ENCODE measurements at regions of chr1 and their contacts with region 1.

Region 1: DNA sequence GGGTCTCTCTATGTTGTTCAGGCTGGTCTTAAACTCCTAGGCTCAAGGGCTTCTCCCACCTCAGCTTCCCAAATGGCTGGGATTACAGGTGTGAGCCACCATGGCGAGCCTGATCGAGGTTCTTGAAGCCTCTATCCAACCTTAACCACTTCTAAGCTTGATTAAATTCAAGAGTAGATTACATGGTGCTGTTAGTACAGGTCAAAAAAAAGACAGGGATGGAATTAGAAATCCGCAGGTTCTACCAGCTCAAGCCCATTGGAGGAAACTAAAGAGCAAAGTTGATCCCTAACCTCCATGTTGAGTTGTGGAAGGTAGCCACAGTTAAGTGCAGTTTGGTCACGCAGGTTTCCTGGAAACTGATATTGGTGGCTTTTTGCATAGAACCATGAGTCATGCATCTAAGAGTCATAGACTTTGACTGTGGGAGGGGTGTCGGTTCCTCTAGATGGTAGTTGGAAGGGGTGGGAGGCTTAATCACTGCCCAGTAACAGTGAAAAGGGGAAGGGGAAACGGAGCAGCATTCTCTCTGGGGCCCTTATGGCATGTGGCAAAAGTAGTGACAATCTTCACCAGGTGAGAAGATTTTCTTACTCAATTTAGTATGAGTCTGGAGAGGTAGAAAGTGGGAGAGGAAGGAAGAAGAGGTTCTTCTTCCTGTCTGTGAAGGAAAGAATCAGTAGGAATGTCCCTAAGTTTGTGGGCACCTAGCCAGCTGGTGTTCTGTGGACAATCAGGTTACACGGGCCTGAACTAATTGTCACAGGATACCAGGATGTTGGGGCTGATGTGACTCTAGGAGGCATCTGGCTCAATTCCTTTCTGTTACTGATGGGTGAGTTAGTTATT is 7.0 kb downstream of the CD53 start:
- DNase-seq: peak; percentile 65
- H3K4me3 Mint-ChIP-seq: peak overlapping the region; percentile 84
- H3K27ac Mint-ChIP-seq: peak overlapping the region; percentile 100
- H3K4me1 Mint-ChIP-seq: peaks cover 75% of the 10 kb centered on the region
- H3K27me3 Mint-ChIP-seq: no peaks in the 10 kb centered on the region

Region 2: GRCh38 chr1:110630839-110631663 is 248.9 kb before region 1 on chr1:
- intact Hi-C with region 1: loop called (anchors 2 kb)
- DNase-seq: peak; percentile 81
- H3K4me3 Mint-ChIP-seq: no peak overlapping the region
- H3K27ac Mint-ChIP-seq: no peak overlapping the region
- H3K4me1 Mint-ChIP-seq: peaks cover 58% of the 10 kb centered on the region
- H3K27me3 Mint-ChIP-seq: no peaks in the 10 kb centered on the region

Region 3: GRCh38 chr1:110798691-110799256 is 81.2 kb before region 1 on chr1:
- intact Hi-C with region 1: no loop called
- DNase-seq: no peak
- H3K4me3 Mint-ChIP-seq: no peak overlapping the region
- H3K27ac Mint-ChIP-seq: no peak overlapping the region
- H3K4me1 Mint-ChIP-seq: no peaks in the 10 kb centered on the region
- H3K27me3 Mint-ChIP-seq: peaks cover 44% of the 10 kb centered on the region

Region 4: GRCh38 chr1:110896090-110896489 is 16.1 kb after region 1 on chr1:
- intact Hi-C with region 1: loop called (anchors 1 kb)
- DNase-seq: no peak
- H3K4me3 Mint-ChIP-seq: no peak overlapping the region
- H3K27ac Mint-ChIP-seq: peak overlapping the region; percentile 59
- H3K4me1 Mint-ChIP-seq: peaks cover 76% of the 10 kb centered on the region
- H3K27me3 Mint-ChIP-seq: no peaks in the 10 kb centered on the region

Region 5: GRCh38 chr1:110963691-110964399 is 83.9 kb after region 1 on chr1 and contains the start of gene LRIF1:
- intact Hi-C with region 1: loop called (anchors 1 kb)
- DNase-seq: peak; percentile 100
- H3K4me3 Mint-ChIP-seq: peak within 1 kb of the TSS; percentile 89
- H3K27ac Mint-ChIP-seq: peak within 1 kb of the TSS; percentile 95
- H3K4me1 Mint-ChIP-seq: peaks cover 36% of the 10 kb centered on the region
- H3K27me3 Mint-ChIP-seq: peaks cover 13% of the 10 kb centered on the region
- total RNA-seq, gene LRIF1: 15.2 and 15.7 TPM in 2 replicates

Region 6: GRCh38 chr1:111133866-111134265 is 253.9 kb after region 1 on chr1:
- intact Hi-C with region 1: no loop called
- DNase-seq: no peak
- H3K4me3 Mint-ChIP-seq: no peak overlapping the region
- H3K27ac Mint-ChIP-seq: peak overlapping the region; percentile 14
- H3K4me1 Mint-ChIP-seq: peaks cover 29% of the 10 kb centered on the region
- H3K27me3 Mint-ChIP-seq: no peaks in the 10 kb centered on the region

Region 7: DNA sequence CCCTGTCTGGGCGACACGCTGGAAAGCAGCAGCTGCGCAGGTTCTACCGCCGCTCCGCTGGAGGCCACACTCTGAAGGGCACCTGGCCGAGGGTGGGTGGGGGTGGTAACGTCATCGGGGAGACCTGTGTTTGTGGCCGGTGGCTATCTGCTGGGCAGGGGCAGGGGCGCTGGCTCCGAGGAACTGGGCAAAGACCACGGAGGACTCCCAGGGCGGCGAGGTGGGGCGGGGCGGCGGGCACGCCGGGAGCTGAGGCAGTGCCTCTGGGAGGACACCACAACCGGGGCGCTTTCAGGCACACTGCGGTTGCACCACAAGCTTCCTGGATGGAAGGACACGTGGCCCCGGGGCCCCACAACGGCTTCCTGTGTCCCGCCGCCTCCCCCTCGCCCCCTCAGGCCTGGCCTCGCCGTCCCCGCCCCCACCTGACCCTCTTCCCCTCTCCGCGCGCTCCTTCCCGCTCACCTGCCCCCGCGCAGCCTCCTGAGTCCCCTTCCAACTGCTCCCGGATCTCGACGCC is 323.8 kb after region 1 on chr1:
- intact Hi-C with region 1: loop called (anchors 5 kb)
- DNase-seq: peak; percentile 83
- H3K4me3 Mint-ChIP-seq: peak overlapping the region; percentile 98
- H3K27ac Mint-ChIP-seq: peak overlapping the region; percentile 97
- H3K4me1 Mint-ChIP-seq: peaks cover 61% of the 10 kb centered on the region
- H3K27me3 Mint-ChIP-seq: no peaks in the 10 kb centered on the region

Region 8: DNA sequence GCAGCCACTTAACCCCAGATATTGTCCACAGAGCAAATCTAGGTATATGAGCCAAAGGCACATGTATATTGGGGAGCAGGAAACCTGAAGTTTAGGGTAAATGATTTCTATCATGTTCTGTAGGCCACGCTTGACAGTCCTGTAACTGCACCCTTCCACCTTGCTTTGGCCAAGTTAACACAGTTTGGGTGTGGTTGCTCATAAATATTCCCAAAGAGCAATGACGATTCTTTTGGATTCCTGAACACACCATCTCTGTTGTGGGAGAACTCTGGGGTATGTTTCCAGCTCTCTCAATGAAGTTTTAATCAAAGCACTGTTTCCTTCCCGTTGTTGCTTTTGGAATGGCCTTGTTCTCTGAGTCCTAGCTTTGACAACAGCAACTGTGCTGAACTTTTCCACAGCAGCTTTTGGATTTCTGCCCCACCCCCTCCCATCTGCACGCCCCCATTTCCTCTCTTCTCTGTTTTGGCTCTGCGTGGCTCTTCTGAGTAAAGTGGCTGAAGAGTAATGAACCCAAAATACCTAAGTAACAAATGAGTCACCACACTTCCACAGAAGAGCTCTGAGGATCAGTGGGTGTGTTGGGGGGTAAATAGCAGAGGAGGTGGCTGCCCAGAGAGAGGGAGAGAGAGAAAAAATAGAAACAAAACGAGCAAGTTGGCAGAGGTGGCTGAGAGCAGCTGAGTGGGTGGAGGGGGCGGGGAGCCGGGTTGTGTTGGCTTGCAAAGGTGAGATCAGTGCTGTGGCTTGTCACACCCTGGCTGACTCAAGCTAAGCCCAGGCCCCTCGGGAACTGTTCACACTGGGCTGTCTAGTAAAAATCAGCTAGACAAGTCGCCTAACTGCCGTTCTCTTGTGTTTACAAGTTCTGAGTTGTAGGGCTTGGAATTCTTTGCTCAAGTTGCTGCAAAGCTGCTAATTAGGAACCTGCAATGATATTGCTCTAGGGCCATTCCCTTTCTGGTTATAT is 712.7 kb after region 1 on chr1:
- intact Hi-C with region 1: loop called (anchors 10 kb)
- DNase-seq: peak; percentile 84
- H3K4me3 Mint-ChIP-seq: peak overlapping the region; percentile 54
- H3K27ac Mint-ChIP-seq: peak overlapping the region; percentile 89
- H3K4me1 Mint-ChIP-seq: peaks cover 74% of the 10 kb centered on the region
- H3K27me3 Mint-ChIP-seq: no peaks in the 10 kb centered on the region